HEK293T (cell line): ENCODE measurements at regions of chr1 and their contacts with region 1.

Region 1: DNA sequence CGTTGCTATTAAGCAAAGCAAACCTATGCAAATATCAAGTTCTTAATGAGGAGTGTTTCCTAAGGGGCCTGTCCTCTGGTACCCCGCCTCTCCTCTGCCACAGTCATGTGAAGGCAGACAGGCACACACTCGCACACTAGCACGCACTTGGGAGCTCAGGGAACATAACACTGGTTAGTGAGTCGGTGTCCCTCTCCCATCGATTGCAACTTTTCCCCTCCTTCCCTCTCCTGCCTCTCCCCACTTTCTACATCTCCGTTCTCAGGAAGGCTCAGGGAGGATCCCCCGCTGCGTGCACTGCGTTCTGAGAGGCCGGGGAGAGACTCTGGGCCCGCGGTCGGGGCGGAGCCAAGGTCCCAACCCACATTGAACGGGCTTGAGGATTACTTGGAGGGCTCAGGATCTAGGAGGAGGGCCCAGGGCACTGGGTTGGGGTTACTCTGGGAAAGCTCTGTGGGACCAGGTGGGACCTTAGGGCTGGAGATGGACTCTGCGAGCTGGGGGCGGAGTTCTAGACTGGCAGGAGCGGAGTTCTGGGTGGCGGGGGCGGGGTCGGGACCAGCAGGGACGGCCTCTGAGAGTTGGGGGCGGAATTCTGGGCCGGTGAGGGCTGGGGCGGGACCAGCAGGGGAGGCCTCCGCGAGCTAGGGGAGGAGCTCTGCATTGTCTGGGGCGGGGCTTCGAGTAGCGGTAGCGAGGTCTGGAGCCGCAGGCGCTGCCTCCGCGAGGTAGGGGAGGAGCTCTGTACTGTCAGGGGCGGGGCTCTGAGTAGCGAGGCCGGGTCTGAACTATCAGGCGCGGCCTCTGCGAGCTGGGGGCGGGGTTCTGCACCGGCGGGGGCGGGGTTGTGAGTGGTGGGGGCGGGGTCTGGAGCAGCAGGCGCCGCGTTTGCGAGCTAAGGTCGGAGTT is 533 bp upstream of the LEPR start:
- DNase-seq: peak; percentile 100

Region 2: DNA sequence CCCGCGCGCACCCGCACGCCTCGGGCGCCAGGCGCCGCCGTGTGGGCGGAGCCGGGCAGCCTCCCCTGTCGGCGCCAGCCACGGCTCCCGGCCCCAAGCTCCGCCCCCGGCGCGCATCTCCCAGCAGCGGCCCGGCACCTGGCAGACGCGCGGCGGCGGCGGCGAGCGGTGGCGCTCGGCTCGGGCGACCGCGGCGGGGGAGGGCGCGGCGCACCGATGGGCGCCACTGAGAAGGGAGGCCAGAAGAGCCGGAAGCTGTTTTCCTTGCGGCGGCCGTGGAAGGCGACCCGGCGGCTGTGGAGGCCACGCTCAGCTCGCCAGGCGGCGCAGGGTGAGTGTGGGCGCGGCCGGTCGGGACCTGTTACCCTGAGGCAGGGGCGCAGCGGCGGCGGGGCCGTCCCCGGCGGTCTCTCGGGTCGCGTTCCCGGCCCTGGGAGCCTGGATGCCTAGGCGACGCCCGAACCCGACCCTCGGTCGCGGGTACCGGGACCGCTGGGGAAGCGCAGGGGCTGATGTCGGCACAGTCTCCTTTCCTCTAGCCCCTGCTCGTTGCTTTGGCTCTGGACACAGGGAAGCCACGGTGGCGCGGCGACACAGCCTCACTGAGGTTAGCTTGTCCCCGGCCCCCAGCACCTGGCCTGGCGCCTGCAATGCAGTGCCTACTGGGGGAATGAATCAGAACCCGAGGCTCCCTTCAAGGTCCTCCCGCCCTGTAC is 165.5 kb before region 1 on chr1:
- CTCF ChIA-PET with region 1: interaction called, 3 read pairs
- POLR2A ChIA-PET with region 1: interaction called, 11 read pairs
- DNase-seq: peak; percentile 97

Region 3: GRCh38 chr1:65437616-65438015 is 17.7 kb after region 1 on chr1:
- CTCF ChIA-PET with region 1: no interaction called
- POLR2A ChIA-PET with region 1: no interaction called
- DNase-seq: no peak